BJ (cell line): ENCODE measurements at regions of chr17 and their contacts with region 1.

Region 1: GRCh38 chr17:20121359-20122253 is 112.4 kb downstream of the SPECC1 start:
- DNase-seq: no peak
- H3K4me3 ChIP-seq: no peak overlapping the region
- H3K27me3 ChIP-seq: no peaks in the 10 kb centered on the region
- CTCF ChIP-seq: peak; percentile 88

Region 2: DNA sequence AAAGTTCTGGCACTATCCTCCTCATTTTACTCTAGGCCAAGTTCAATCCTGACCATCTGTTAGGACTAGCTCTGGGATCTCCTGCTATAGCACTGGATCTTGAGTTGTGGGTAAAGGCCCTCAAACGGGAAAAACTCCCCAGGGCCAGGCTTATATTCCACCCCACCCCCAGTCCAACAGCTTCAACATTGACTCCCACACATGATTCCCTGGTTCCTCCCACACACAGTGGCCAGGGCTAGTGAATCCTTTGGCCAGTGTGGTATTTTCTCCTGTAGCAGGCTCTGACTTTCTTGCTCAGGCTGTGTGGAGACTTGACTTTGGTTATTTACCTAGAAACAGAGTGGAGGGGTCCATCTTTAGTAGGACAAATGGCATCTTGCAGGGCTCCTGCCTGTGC is 133.7 kb before region 1 on chr17:
- CTCF ChIA-PET with region 1: interaction called, 47 read pairs
- POLR2A ChIA-PET with region 1: no interaction called
- DNase-seq: no peak
- H3K4me3 ChIP-seq: no peak overlapping the region
- H3K27me3 ChIP-seq: 0 out of 2 replicates have a peak, but pooled peaks cover 2% of the 10 kb centered on the region
- CTCF ChIP-seq: no peak

Region 3: DNA sequence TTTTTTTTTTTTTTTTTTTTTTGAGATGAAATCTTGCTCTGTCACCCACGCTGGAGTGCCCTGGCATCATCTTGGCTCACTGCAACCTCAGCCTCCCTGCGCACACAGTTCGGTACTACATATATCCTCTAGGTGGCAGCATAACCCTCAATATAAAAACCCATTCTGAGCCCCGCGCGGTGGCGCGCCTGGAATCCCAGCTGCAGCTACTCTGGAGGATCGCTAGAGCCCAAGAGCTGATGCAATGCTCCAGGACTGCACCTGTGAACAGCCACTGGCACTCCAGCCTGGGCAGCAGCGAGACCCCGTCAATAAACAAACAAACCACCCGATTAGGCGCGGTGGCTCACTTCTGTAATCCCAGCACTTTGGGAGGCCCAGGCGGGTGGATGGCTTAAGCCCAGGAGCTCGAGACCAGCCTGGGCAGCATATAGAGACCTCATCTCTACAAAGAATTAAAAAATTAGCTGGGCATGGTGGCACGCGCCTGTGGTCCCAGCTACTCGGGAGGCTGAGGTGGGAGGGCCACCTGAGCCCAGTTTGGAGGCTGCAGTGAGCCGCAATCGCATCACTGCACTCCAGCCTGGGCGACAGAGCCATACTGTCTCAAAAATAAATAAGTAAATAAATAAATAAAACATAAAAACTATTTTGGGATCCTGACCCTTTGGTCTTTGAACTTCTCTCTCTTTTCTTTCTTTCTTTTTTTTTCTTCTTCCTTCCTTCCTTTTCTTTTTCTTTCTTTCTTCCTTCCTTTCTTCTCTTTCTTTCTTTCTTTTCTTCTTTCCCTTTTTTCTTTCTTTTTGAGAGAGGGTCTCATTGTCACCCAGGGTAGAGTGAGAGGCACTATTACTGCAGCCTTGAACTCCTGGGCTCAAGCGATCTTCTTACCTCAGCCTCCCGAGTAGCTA is 128.5 kb before region 1 on chr17:
- CTCF ChIA-PET with region 1: interaction called, 47 read pairs
- POLR2A ChIA-PET with region 1: no interaction called
- DNase-seq: peak; percentile 35
- H3K4me3 ChIP-seq: no peak overlapping the region
- H3K27me3 ChIP-seq: peaks cover 4% of the 10 kb centered on the region; the same call in 1 of the 2 replicates
- CTCF ChIP-seq: peak; percentile 68

Region 4: GRCh38 chr17:20141198-20141972 is 19.8 kb after region 1 on chr17:
- CTCF ChIA-PET with region 1: interaction called, 10 read pairs
- POLR2A ChIA-PET with region 1: no interaction called
- DNase-seq: no peak
- H3K4me3 ChIP-seq: no peak overlapping the region
- H3K27me3 ChIP-seq: peaks cover 2% of the 10 kb centered on the region; the same call in 1 of the 2 replicates
- CTCF ChIP-seq: no peak

Region 5: GRCh38 chr17:20315821-20316220 is 194.2 kb after region 1 on chr17:
- CTCF ChIA-PET with region 1: interaction called, 46 read pairs
- POLR2A ChIA-PET with region 1: no interaction called
- DNase-seq: no peak
- H3K4me3 ChIP-seq: no peak overlapping the region
- H3K27me3 ChIP-seq: no peaks in the 10 kb centered on the region
- CTCF ChIP-seq: no peak